Left lung (tissue), 14 donors: ENCODE measurements at regions of chr2 and their contacts with region 1.

Region 1: GRCh38 chr2:28594289-28595108 is 98.6 kb downstream of the PLB1 start:
- DNase-seq: peak; percentile 73 to 93 (median 88)
- ATAC-seq: peak; percentile 94
- H3K4me3 ChIP-seq: no peak overlapping the region
- H3K27ac ChIP-seq: peak overlapping the region; percentile 27 to 73
- H3K4me1 ChIP-seq: peaks cover 5 to 26% of the 10 kb centered on the region in 2 donors
- H3K27me3 ChIP-seq: no peaks in the 10 kb centered on the region
- CTCF ChIP-seq: peak; percentile 76 to 85

Region 2: DNA sequence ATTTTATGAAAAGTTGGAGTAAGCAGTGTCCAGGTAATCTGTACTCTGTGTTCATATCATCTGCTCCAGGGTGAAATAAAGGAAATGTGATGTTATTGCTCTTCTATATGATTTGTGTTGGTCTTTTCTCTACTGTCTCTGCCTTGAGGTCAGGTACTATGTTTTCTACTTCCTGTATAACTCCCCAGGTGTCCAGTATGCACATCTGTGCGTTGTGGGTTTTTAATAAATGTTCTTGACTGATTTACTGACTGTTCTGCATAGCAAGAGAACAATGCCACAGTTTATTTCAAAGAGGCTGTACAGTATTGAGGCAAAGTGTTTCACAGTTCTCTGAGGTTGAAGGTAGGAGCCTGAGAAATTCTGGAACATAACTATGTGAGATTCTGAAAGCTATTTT is 614.3 kb before region 1 on chr2:
- intact Hi-C with region 1: no loop called
- DNase-seq: no peak
- ATAC-seq: no peak
- H3K4me3 ChIP-seq: no peak overlapping the region
- H3K27ac ChIP-seq: no peak overlapping the region
- H3K4me1 ChIP-seq: peaks cover 0 to 10% of the 10 kb centered on the region in 2 donors
- H3K27me3 ChIP-seq: no peaks in the 10 kb centered on the region
- CTCF ChIP-seq: no peak

Region 3: DNA sequence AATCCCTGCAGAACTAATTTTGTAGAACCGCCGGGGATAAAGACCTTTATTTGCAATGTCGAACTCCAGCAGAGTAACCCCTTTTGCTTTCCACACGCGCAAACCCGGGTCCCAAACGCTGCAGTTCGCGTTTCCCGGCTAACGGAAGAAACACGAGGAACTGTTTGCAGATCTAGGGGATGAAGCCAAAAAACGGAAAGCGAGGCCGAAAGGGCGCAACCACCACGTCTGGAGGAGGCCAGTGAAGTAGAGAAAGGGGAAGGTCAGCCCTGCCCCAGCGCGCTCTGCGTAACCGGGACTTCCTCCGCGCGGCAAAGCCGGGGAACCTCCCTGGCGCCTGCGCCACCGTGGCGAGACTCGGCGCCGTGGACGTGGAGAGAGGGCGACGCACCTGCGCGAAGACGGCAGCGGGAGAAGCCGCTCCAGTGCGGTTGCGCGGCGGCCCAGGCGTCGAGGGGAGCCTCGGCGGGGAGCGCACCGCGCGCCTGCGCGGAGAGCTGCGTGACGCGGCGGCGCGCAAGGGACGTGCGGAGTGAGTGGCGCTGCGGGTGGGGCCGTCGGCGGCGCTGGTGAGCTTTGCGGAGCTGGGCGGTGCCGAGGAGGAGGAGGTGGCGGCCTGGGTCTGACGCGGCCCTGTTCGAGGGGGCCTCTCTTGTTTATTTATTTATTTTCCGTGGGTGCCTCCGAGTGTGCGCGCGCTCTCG is 156.9 kb after region 1 on chr2 and contains the start of gene PPP1CB:
- intact Hi-C with region 1: loop called in 1 of 2 experiments (anchors 10 kb)
- DNase-seq: peak; percentile 94 to 99 (median 98)
- ATAC-seq: peak; percentile 90
- H3K4me3 ChIP-seq: peak within 1 kb of the TSS; percentile 83 to 96
- H3K27ac ChIP-seq: peak within 1 kb of the TSS; percentile 100
- H3K4me1 ChIP-seq: peaks cover 9 to 51% of the 10 kb centered on the region in 2 donors
- H3K27me3 ChIP-seq: no peaks in the 10 kb centered on the region
- CTCF ChIP-seq: no peak
- polyA plus RNA-seq, gene PPP1CB: 144 to 205 (median 170) TPM